Astrocyte of the cerebellum (primary cell): ENCODE measurements at regions of chr9 and their contacts with region 1.

Region 1: DNA sequence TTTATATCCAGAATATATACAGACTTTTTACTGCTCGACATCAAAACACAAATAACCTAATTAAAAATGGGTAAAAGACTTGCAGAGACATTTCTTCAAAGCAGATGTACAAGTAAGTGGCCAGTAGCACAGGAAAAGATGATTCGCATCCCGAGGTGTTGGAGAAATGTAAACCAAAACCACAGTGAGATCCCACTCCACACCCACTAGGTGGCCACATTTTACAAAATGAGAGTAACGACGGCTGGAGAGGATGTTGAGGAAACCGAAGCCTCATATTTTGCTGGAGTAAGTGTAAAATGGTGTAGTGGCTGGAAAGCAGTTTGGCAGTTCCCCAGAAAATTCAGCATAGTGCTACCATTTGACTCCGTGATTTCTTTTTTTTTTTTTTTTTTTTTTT is 21.2 kb upstream of the GBGT1 start:
- DNase-seq: peak; percentile 71
- H3K4me3 ChIP-seq: no peak overlapping the region
- CTCF ChIP-seq: peak; percentile 73

Region 2: GRCh38 chr9:133115448-133116345 is 69.3 kb before region 1 on chr9:
- in situ Hi-C with region 1: loop called (anchors 5 kb)
- DNase-seq: peak; percentile 46
- H3K4me3 ChIP-seq: no peak overlapping the region
- CTCF ChIP-seq: no peak